Left cardiac atrium (tissue), 4 donors: ENCODE measurements at regions of chr17 and their contacts with region 1.

Region 1: GRCh38 chr17:5100832-5101231 is 10.8 kb downstream of the ZNF232 start:
- DNase-seq: no peak
- ATAC-seq: no peak

Region 2: DNA sequence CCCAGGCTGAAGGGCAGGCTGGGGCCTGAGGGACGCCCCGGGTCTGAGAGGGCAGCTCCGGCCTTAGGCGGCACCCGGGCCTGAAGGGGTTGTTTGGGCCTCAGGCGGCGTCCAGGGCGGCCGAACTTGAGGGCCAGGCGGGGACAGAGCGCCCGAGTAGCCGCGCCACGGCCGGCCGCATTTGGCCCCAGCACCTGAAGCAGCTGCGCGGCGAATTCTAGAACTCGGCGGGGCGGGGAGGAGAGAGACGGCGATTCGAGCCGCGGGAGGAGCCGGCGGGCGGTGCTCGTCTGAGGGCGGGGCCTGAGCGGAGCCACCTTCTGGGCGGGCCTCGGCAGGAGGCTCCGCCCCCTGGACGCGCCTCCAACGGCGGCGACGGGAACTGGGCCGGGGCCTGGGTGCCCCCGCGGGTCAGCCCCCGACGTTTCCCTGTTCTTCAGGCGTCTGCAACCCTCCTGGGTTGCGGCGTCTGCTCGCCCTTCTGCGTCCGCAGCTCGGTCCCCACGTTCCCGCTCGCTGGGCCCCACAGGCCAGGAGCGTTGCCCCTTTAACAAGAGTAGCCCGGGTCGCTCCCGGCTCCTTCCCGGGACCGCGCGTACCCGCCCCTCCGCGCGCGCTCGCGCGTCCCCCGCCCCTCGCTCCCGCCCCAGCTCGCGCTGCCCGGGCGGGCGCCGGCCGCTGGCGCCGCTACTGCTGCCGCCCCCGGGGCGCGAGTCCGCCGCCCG is 103.4 kb before region 1 on chr17 and contains the starts of genes INCA1 and KIF1C:
- intact Hi-C with region 1: no loop called
- DNase-seq: peak; percentile 95
- ATAC-seq: peak; percentile 93 to 94
- total RNA-seq, gene INCA1: 1.8 to 2.6 TPM
- total RNA-seq, gene KIF1C: 405 to 447 TPM

Region 3: GRCh38 chr17:5164436-5164835 is 63.6 kb after region 1 on chr17:
- intact Hi-C with region 1: no loop called
- DNase-seq: no peak
- ATAC-seq: no peak

Region 4: DNA sequence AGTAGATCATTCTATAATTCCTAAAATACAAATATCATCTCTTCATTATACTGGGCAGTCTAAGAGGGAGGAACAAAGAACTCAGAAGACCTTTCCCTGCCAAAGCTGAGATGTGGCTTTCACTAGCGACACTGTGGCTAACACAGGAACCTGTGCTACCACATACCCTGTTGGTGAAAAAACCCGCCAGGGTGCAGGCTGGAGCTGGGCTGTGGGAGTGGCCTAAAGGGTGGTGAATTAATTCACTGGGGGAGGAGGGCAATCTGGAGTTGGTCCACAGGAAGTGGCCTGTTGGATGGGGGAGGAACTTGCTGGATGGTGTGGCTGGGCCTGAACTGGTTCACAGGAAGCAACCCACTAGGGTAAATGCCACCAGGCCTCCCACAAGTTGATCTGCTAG is 83.5 kb after region 1 on chr17:
- intact Hi-C with region 1: loop called in 1 of 2 experiments (anchors 10 kb)
- DNase-seq: no peak
- ATAC-seq: peak in 1 of 2 donors; percentile 38